IMR-90 (cell line): ENCODE measurements at regions of chr10 and their contacts with region 1.

Region 1: DNA sequence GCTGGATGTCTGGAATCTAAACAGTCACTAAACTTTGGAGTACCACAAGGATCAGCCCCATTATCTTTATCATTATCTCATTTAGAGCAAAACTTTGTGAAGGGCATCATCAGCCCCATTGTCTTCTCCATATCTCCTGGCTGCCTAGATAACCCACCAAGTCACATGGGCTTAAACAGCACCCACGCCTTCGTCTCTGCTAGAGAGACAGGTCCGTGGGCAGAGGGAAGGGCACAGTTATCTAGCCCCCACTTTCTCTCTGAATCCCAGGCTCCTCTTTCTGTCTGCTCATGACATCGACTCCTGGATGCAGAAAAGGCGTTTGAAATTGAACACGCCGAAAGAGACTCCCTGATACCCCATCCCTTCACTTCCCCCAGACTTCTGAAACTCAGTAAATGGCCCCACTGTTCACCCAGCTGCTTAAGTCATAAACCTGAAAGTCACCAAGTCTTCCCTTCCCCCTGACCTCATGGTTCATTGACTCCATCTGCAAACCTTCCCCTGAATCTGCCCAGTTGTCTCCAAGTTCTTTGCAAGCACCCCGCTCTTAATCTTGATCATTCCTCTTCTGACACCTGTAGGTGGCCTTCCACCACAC is 20.9 kb upstream of the PARD3 start:
- DNase-seq: no peak
- ATAC-seq: no peak
- H3K4me3 ChIP-seq: no peak overlapping the region
- H3K27ac ChIP-seq: no peak overlapping the region
- H3K4me1 ChIP-seq: no peaks in the 10 kb centered on the region
- H3K27me3 ChIP-seq: peaks cover 37% of the 10 kb centered on the region
- CTCF ChIP-seq: no peak
- POLR2A ChIP-seq: no peak
- RAD21 ChIP-seq: no peak

Region 2: DNA sequence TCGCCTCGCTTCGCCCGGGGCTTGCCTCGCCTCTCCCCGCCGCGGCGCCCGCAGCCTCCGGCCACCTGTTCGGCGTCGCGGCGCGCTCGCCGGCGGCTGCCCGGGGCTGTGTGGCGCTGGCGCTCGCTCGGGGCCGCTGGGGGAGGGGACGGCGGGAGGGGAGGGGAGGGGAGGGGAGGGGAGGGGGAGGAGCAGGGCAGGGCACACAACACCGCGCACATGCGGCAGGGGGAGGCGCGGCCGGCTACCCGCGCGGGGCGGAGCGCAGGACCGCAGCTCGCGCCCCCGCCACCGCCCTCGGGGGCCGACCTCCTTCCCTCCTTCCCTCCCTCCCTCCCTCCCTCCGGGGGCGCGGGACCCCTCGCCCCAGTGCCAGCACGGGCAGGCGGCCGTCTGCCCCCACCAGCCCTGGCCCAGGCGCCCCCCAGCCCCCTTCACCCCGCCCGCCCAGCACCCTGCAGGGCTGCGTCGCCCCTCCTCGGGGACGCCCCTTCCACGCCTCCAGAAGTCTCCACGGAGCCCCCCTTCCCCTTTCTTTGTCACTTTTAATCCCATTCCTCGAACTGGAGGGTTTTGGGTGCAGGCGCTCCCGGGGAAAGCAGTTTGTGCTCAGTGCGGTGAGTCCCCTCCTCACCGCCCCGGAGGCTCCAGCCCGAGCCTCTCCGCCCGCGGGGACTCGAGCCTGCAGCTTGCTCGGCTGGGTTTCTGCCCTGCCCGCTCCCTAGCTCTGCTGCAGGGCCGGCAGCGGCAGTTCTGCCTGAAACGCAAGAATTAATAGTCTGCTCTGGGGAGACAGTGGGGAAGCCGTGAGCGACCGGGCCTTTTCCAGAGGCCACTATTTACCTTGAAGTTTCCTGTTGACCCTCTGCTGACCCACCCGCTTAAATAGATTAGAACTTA is 20.6 kb before region 1 on chr10 and contains the start of gene PARD3:
- CTCF ChIA-PET with region 1: no interaction called
- POLR2A ChIA-PET with region 1: interaction called, 11 read pairs
- dilution Hi-C with region 1: no loop called
- in situ Hi-C with region 1: no loop called
- intact Hi-C with region 1: no loop called
- DNase-seq: peak; percentile 51
- ATAC-seq: peak; percentile 85
- H3K4me3 ChIP-seq: peak within 1 kb of the TSS; percentile 98
- H3K27ac ChIP-seq: peak within 1 kb of the TSS; percentile 93
- H3K4me1 ChIP-seq: peaks cover 4% of the 10 kb centered on the region
- H3K27me3 ChIP-seq: peaks cover 2% of the 10 kb centered on the region; the same call in 1 of the 2 replicates
- CTCF ChIP-seq: no peak
- POLR2A ChIP-seq: no peak
- RAD21 ChIP-seq: no peak
- total RNA-seq, gene PARD3: 34.2 and 37.5 TPM in 2 replicates